ENCODE measurements at regions of chr4 and their contacts with region 1.

Region 1: GRCh38 chr4:108611365-108611764 is 9.0 kb upstream of the RPL34 start:
- DNase-seq: peak; percentile 30
- H3K4me3 Mint-ChIP-seq: peak overlapping the region; percentile 68
- H3K27ac Mint-ChIP-seq: no peak overlapping the region
- H3K4me1 Mint-ChIP-seq: peaks cover 20% of the 10 kb centered on the region
- H3K27me3 Mint-ChIP-seq: no peaks in the 10 kb centered on the region

Region 2: GRCh38 chr4:108527723-108528122 is 83.6 kb before region 1 on chr4:
- CTCF ChIA-PET with region 1: no interaction called
- intact Hi-C with region 1: loop called (anchors 2 kb)
- DNase-seq: peak; percentile 45
- H3K4me3 Mint-ChIP-seq: peak overlapping the region; percentile 34
- H3K27ac Mint-ChIP-seq: peak overlapping the region; percentile 70
- H3K4me1 Mint-ChIP-seq: peaks cover 58% of the 10 kb centered on the region
- H3K27me3 Mint-ChIP-seq: no peaks in the 10 kb centered on the region

Region 3: DNA sequence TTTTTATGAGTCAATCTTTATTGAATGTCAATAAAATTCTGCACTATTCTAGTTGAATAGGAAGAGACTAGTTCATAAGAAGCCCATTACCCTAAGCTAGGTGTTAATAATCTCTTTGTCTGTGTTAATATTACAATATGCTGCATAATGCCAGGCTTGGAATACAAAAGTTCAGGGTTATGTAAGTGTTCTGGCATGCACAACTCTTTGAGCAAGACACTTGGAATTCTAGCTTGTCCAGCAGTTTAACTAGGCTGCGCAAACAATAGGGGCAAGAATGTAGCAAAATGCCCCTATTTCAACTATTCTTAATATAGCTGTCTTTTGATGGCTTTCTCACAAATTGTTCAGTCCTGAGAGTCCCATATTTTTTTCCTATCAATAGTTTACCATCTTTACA is 182.8 kb after region 1 on chr4:
- CTCF ChIA-PET with region 1: no interaction called
- intact Hi-C with region 1: no loop called
- DNase-seq: no peak
- H3K4me3 Mint-ChIP-seq: no peak overlapping the region
- H3K27ac Mint-ChIP-seq: no peak overlapping the region
- H3K4me1 Mint-ChIP-seq: no peaks in the 10 kb centered on the region
- H3K27me3 Mint-ChIP-seq: no peaks in the 10 kb centered on the region